Heart right ventricle (tissue), 16 donors: ENCODE measurements at regions of chr13 and their contacts with region 1.

Region 1: GRCh38 chr13:52128714-52129700 is at the start of gene NEK5:
- DNase-seq: peak; percentile 49 to 70
- ATAC-seq: peak; percentile 84 to 95 (median 90)
- H3K4me3 ChIP-seq: peak within 1 kb of the TSS; percentile 59 to 78 (median 74)
- H3K27ac ChIP-seq: peak within 1 kb of the TSS in 4 of 10 donors; percentile 1 to 53 (median 28)
- H3K4me1 ChIP-seq: peaks cover 0 to 22% (median 13%) of the 10 kb centered on the region in 9 donors
- H3K27me3 ChIP-seq: no peaks in the 10 kb centered on the region
- CTCF ChIP-seq: peak; percentile 52 to 89 (median 80)
- total RNA-seq, gene NEK5: 0.10 to 0.93 (median 0.27) TPM in 9 of 10 donors, not detected in the other

Region 2: GRCh38 chr13:51814825-51815650 is 314.0 kb before region 1 on chr13:
- intact Hi-C with region 1: loop called in 7 of 10 experiments (anchors 2 to 10 kb)
- DNase-seq: peak in 1 of 2 donors; percentile 66
- ATAC-seq: peak; percentile 49 to 73 (median 64)
- H3K4me3 ChIP-seq: peak overlapping the region in 6 of 10 donors; percentile 20 to 30 (median 26)
- H3K27ac ChIP-seq: peak overlapping the region in 2 of 10 donors; percentile 33 to 66
- H3K4me1 ChIP-seq: peaks cover 4 to 38% (median 22%) of the 10 kb centered on the region in 9 donors
- H3K27me3 ChIP-seq: no peaks in the 10 kb centered on the region
- CTCF ChIP-seq: peak; percentile 75 to 90 (median 85)

Region 3: DNA sequence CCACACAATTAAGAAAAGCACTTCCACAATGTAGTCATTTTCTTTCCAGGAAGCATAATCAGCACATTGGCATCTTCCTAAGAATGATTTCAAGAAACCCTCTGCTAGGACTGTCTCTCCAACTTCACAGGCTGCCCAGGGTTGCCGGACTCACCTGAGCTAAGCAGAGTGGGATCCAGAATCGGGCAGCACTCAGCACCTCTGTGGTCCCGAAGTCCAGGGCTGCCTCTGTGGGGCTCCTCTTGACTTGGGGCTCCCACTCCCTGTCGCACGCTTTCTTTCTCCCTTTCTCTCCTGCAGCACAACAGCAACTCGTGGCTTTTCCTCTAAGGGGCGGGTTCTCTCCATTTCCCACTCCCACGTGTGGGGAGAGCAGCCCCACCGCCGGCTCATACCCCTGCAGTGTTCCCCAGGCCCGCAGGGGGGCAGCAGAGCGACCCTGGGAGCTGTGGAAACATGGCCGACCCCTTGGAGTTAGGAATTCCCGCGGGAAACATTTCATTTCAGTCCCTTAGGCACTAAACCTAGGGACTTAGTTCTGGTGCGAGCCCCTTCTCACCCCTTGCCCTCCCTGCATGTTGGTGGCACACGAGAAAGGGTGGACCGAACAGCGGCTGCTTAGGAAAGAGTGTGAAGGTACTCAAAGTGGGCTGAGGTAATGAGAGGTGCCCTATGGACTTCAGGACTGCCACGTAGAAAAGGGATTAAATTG is 284.0 kb before region 1 on chr13 and contains the start of gene TMEM272:
- intact Hi-C with region 1: loop called in 4 of 10 experiments (anchors 5 to 10 kb)
- DNase-seq: peak; percentile 31 to 61
- ATAC-seq: peak; percentile 54 to 87 (median 82)
- H3K4me3 ChIP-seq: peak within 1 kb of the TSS in 5 of 10 donors; percentile 2 to 29 (median 15)
- H3K27ac ChIP-seq: no peak within 1 kb of the TSS
- H3K4me1 ChIP-seq: peaks cover 0 to 22% (median 6%) of the 10 kb centered on the region in 9 donors
- H3K27me3 ChIP-seq: no peaks in the 10 kb centered on the region
- CTCF ChIP-seq: peak; percentile 70 to 95 (median 90)
- total RNA-seq, gene TMEM272: 0.32 to 2.7 (median 0.77) TPM

Region 4: GRCh38 chr13:51895906-51896888 is 232.8 kb before region 1 on chr13:
- intact Hi-C with region 1: loop called in 9 of 10 experiments (anchors 1 to 10 kb)
- DNase-seq: peak; percentile 36 to 43
- ATAC-seq: peak; percentile 78 to 92 (median 83)
- H3K4me3 ChIP-seq: no peak overlapping the region
- H3K27ac ChIP-seq: no peak overlapping the region
- H3K4me1 ChIP-seq: no peaks in the 10 kb centered on the region
- H3K27me3 ChIP-seq: no peaks in the 10 kb centered on the region
- CTCF ChIP-seq: peak; percentile 50 to 78 (median 69)

Region 5: DNA sequence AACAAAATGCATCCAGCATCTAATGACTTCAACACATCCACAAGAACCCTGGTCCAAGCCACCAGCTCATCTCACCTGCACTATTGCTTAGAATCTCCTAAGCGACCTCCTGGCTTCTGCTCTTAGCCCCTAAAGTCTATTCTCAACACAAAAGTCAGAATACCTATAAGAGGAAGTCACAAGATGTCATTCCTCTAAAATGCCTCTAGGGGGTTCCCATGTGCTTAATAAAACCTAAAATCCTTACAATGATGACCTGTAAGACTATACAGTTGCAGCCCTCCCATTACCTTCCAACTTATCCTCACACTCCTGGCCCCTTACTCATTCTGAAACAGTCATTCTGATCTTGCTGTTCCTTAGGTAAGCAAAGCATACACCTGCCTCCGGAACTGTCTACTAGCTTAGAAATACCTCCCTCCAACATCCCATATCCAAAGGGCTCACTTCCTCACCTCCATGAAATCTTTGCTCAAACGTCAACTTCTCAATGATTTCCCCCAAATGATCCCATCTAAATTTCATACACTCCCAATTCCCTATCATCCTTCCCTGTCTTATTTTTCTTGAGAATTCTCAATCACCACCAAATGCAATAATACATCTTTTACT is 127.8 kb before region 1 on chr13:
- intact Hi-C with region 1: loop called (anchors 2 to 5 kb)
- DNase-seq: no peak
- ATAC-seq: peak in 5 of 8 donors; percentile 29 to 68 (median 52)
- H3K4me3 ChIP-seq: no peak overlapping the region
- H3K27ac ChIP-seq: no peak overlapping the region
- H3K4me1 ChIP-seq: peaks cover 2 to 18% (median 11%) of the 10 kb centered on the region in 9 donors
- H3K27me3 ChIP-seq: no peaks in the 10 kb centered on the region
- CTCF ChIP-seq: peak; percentile 50 to 80 (median 75)

Region 6: DNA sequence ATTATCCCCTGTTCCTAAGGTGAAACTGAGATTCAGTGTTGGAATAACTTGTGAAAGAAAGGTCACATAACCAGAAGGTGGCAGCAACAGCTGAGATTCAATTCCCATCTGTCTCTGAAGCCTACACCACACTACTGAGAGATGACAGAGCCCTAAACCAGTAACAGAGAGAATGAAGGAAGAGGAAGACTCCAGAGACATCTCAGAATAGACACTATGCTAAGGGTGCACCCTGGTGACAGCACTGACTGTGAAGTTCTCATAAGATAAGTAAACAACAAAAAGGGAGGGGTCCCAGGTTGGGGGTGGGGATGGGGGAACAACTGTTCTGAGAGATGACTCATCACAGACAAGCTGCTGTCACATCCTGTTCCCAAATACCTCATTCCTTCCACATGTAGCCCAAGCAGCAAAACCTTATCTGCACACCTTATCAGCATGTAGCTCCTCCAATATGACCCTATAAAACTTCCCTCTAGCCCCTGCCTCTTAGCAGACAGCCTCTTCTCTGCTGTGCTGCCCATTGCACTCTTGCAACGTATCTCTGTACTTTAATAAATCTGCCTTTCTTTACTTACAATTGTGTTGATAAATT is 58.0 kb before region 1 on chr13:
- intact Hi-C with region 1: loop called in 1 of 10 experiments (anchors 10 kb)
- DNase-seq: no peak
- ATAC-seq: peak in 4 of 8 donors; percentile 44 to 79 (median 69)
- H3K4me3 ChIP-seq: no peak overlapping the region
- H3K27ac ChIP-seq: no peak overlapping the region
- H3K4me1 ChIP-seq: no peaks in the 10 kb centered on the region
- H3K27me3 ChIP-seq: no peaks in the 10 kb centered on the region
- CTCF ChIP-seq: peak in 3 of 9 donors; percentile 29 to 37 (median 31)